ENCODE measurements at regions of chr7 and their contacts with region 1.

Region 1: DNA sequence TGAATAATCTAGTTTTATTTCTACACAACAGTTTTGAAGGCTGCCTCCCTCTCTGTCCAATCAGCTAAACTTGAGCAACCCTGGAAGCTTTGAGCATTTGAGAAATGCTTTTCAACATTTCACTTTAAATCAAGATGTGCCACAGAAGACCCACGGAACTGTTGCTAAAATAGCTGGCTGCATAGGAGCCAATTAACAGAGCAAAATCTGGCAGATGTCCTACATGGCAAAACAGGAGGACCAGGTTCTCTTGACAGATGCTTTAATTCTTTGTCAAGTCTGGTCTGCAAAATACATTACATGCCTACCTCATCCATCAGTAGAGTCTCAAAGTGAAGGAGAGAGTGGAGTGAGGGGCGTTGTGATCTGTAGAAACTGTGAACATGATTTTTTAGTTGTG is 185.9 kb downstream of the DPY19L1 start:
- DNase-seq: no peak
- ATAC-seq: no peak
- H3K4me3 ChIP-seq: peak overlapping the region in 1 of 2 experiments; percentile 50; a peak in 2 of 4 replicates
- H3K27ac ChIP-seq: peak overlapping the region; percentile 71
- H3K4me1 ChIP-seq: peaks cover 15 to 37% of the 10 kb centered on the region in 2 experiments
- H3K27me3 ChIP-seq: no peaks in the 10 kb centered on the region
- CTCF ChIP-seq: no peak
- POLR2A ChIP-seq: no peak
- RAD21 ChIP-seq: no peak

Region 2: DNA sequence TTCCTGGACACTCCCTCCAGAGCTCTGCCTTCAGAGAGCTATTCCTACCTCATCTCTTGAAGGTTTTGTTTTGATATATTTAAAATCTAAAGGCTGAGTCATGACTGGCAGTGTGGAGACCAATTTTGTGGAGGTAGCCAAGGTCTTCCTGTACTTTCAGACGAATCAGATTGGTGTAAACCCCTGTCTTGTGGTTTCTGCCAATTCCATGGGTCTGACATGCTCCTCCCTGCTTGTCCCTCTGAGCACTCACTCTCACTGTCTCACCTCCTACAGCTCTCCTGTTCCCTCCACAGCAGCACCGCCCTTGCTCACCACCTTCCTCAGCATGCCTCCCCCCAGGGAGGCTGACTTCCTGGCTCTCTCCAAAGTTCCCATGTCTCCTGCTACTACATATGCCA is 13.6 kb before region 1 on chr7:
- CTCF ChIA-PET with region 1: no interaction called
- POLR2A ChIA-PET with region 1: interaction called, 16 read pairs
- RAD21 ChIA-PET with region 1: no interaction called
- intact Hi-C with region 1: no loop called
- DNase-seq: no peak
- ATAC-seq: peak; percentile 83
- H3K4me3 ChIP-seq: no peak overlapping the region
- H3K27ac ChIP-seq: no peak overlapping the region
- H3K4me1 ChIP-seq: peaks cover 8 to 20% of the 10 kb centered on the region in 2 experiments; a peak in 3 of 4 replicates
- H3K27me3 ChIP-seq: no peaks in the 10 kb centered on the region
- CTCF ChIP-seq: no peak
- POLR2A ChIP-seq: no peak
- RAD21 ChIP-seq: no peak